ENCODE measurements at regions of chr2 and their contacts with region 1.

Region 1: GRCh38 chr2:130949958-130950357 is 113.2 kb downstream of the ARHGEF4 start:
- DNase-seq: no peak
- H3K4me3 ChIP-seq: no peak overlapping the region
- H3K4me3 Mint-ChIP-seq: no peak overlapping the region
- H3K27ac Mint-ChIP-seq: no peak overlapping the region
- H3K4me1 ChIP-seq: no peaks in the 10 kb centered on the region
- H3K4me1 Mint-ChIP-seq: no peaks in the 10 kb centered on the region
- H3K27me3 ChIP-seq: no peaks in the 10 kb centered on the region
- H3K27me3 Mint-ChIP-seq: no peaks in the 10 kb centered on the region
- CTCF ChIP-seq: no peak

Region 2: DNA sequence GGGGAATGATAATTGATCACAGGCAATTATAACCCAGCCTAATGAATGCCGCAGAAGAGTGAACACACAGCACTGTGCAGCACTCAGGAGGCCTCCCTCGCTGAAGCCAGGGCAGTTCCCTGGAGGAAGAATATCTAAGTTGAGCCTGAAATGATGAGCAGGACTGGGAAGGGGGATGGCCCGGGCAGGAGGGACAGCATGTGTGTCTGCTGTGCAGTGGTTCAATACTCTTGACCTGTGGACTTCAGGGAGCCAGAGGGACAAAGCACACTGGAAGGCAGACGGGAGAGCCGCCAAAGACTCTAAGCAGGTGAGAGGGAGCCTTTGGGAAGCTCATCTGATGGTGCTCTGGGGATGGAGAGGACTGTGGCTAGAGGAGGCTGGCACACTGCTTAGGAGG is 50.7 kb before region 1 on chr2:
- CTCF ChIA-PET with region 1: no interaction called
- POLR2A ChIA-PET with region 1: no interaction called
- intact Hi-C with region 1: loop called (anchors 5 kb)
- DNase-seq: no peak
- H3K4me3 ChIP-seq: no peak overlapping the region
- H3K4me3 Mint-ChIP-seq: no peak overlapping the region
- H3K27ac Mint-ChIP-seq: no peak overlapping the region
- H3K4me1 ChIP-seq: no peaks in the 10 kb centered on the region
- H3K4me1 Mint-ChIP-seq: no peaks in the 10 kb centered on the region
- H3K27me3 ChIP-seq: no peaks in the 10 kb centered on the region; the same call in 1 of the 2 replicates
- H3K27me3 Mint-ChIP-seq: peaks cover 10% of the 10 kb centered on the region
- CTCF ChIP-seq: no peak